Gastrocnemius medialis (tissue), 4 donors: ENCODE measurements at regions of chr7 and their contacts with region 1.

Region 1: DNA sequence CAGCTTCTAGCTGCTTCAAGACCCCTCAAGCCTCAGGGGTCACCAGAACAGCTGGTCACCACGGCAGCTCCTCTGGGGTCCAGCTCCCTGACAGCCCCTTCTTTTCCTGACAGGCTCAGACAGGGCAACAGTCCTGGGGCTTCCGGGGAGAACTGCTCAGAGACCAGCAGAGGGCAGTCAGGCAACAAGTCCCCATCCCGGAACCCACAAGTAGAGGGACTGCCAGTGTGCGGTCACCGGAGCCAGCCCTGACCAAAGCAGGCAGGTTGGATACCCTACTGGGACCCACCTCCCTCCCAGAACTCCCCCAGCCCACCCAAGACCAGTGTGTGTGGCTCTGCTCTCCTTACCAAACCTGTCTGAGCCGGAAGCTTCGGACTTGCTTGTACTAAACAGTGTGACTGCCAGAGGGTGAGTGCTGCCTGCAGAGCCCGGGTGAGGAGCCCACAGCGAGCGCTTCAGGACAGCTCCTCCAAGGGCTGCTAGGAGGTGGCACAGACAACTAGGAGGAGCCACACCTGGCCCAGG is 40.3 kb downstream of the YKT6 start:
- DNase-seq: peak; percentile 66 to 79
- ATAC-seq: peak; percentile 88 to 97
- H3K4me3 ChIP-seq: no peak overlapping the region
- H3K27ac ChIP-seq: no peak overlapping the region
- H3K4me1 ChIP-seq: peaks cover 5 to 9% of the 10 kb centered on the region in 2 donors
- H3K27me3 ChIP-seq: no peaks in the 10 kb centered on the region
- CTCF ChIP-seq: peak; percentile 62 to 79 (median 75)
- POLR2A ChIP-seq: no peak

Region 2: GRCh38 chr7:44284216-44284615 is 43.2 kb after region 1 on chr7:
- in situ Hi-C with region 1: no loop called
- intact Hi-C with region 1: loop called (anchors 2 kb)
- DNase-seq: peak; percentile 0 to 12
- ATAC-seq: no peak
- H3K4me3 ChIP-seq: no peak overlapping the region
- H3K27ac ChIP-seq: peak overlapping the region; percentile 91 to 94 (median 92)
- H3K4me1 ChIP-seq: peaks cover 50 to 51% of the 10 kb centered on the region in 2 donors
- H3K27me3 ChIP-seq: no peaks in the 10 kb centered on the region
- CTCF ChIP-seq: no peak
- POLR2A ChIP-seq: no peak

Region 3: DNA sequence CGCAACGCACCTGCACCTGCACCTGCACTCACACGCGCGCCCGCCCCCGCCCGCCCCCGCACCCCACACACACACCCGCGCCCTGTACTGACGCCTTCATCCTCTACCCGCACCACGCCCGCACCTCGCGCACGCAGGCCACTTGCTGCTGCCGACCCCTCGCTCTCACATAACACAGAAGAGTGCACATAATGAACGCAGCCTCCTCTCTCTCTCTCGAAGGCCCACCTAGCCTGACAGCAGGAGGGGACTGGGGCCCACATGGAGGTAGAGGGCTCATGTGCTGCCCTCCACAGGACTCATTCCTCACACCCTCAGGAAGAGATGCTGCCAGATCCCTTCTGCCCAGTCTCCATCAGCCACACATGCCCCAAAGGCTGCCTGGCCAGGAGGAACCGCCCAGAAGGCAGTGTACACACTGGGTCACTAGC is 84.8 kb after region 1 on chr7:
- in situ Hi-C with region 1: no loop called
- intact Hi-C with region 1: loop called (anchors 1 kb)
- DNase-seq: peak in 1 of 2 donors; percentile 61
- ATAC-seq: peak; percentile 16 to 27
- H3K4me3 ChIP-seq: peak overlapping the region; percentile 31 to 53 (median 51)
- H3K27ac ChIP-seq: peak overlapping the region; percentile 54 to 94 (median 64)
- H3K4me1 ChIP-seq: peaks cover 24 to 30% of the 10 kb centered on the region in 2 donors
- H3K27me3 ChIP-seq: no peaks in the 10 kb centered on the region
- CTCF ChIP-seq: peak in 2 of 5 experiments; percentile 31 to 41
- POLR2A ChIP-seq: no peak

Region 4: DNA sequence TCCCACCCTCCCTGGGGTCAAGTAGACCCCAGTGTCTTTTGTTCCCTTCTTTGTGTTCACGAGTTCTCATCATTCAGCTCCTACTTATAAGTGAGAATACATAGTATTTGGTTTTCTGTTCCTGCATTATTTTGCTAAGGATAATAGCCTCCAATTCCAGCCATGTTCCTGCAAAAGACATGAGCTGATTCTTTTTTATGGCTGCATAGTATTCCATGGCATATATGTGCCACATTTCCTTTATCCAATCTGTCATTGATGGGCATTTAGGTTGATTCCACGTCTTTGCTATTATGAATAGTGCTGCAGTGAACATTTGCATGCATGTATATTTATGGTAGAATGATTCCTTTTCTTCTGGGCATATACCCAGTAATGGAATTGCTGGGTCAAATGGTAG is 112.6 kb after region 1 on chr7:
- in situ Hi-C with region 1: no loop called
- intact Hi-C with region 1: no loop called
- DNase-seq: no peak
- ATAC-seq: no peak
- H3K4me3 ChIP-seq: no peak overlapping the region
- H3K27ac ChIP-seq: no peak overlapping the region
- H3K4me1 ChIP-seq: peaks cover 4 to 6% of the 10 kb centered on the region in 2 donors
- H3K27me3 ChIP-seq: no peaks in the 10 kb centered on the region
- CTCF ChIP-seq: no peak
- POLR2A ChIP-seq: no peak

Region 5: GRCh38 chr7:44477063-44477830 is 236.2 kb after region 1 on chr7:
- in situ Hi-C with region 1: loop called in 3 of 4 experiments (anchors 5 to 25 kb)
- intact Hi-C with region 1: loop called (anchors 1 kb)
- DNase-seq: peak; percentile 47 to 77
- ATAC-seq: peak; percentile 85 to 99
- H3K4me3 ChIP-seq: no peak overlapping the region
- H3K27ac ChIP-seq: peak overlapping the region in 3 of 4 donors; percentile 6 to 47 (median 38)
- H3K4me1 ChIP-seq: peaks cover 27 to 35% of the 10 kb centered on the region in 2 donors
- H3K27me3 ChIP-seq: no peaks in the 10 kb centered on the region
- CTCF ChIP-seq: peak; percentile 89 to 95 (median 90)
- POLR2A ChIP-seq: no peak

Region 6: GRCh38 chr7:44565097-44565794 is 324.2 kb after region 1 on chr7:
- in situ Hi-C with region 1: no loop called
- intact Hi-C with region 1: loop called (anchors 1 kb)
- DNase-seq: peak; percentile 28 to 65
- ATAC-seq: peak; percentile 89 to 92
- H3K4me3 ChIP-seq: no peak overlapping the region
- H3K27ac ChIP-seq: peak overlapping the region in 3 of 4 donors; percentile 28 to 56 (median 42)
- H3K4me1 ChIP-seq: peaks cover 2 to 5% of the 10 kb centered on the region in 2 donors
- H3K27me3 ChIP-seq: no peaks in the 10 kb centered on the region
- CTCF ChIP-seq: peak; percentile 92 to 99 (median 96)
- POLR2A ChIP-seq: no peak